Ovary (tissue), 10 donors: ENCODE measurements at regions of chr17 and their contacts with region 1.

Region 1: GRCh38 chr17:28792877-28793661 is 49.3 kb downstream of the TRAF4 start:
- DNase-seq: no peak
- H3K4me3 ChIP-seq: no peak overlapping the region
- H3K27ac ChIP-seq: no peak overlapping the region
- H3K4me1 ChIP-seq: no peaks in the 10 kb centered on the region
- H3K27me3 ChIP-seq: no peaks in the 10 kb centered on the region
- CTCF ChIP-seq: no peak
- EP300 ChIP-seq: no peak
- POLR2A ChIP-seq: no peak

Region 2: GRCh38 chr17:28509789-28510188 is 283.3 kb before region 1 on chr17:
- intact Hi-C with region 1: loop called in 1 of 4 experiments (anchors 5 kb)
- DNase-seq: no peak
- H3K4me3 ChIP-seq: no peak overlapping the region
- H3K27ac ChIP-seq: no peak overlapping the region
- H3K4me1 ChIP-seq: no peaks in the 10 kb centered on the region
- H3K27me3 ChIP-seq: no peaks in the 10 kb centered on the region
- CTCF ChIP-seq: no peak
- EP300 ChIP-seq: no peak
- POLR2A ChIP-seq: no peak

Region 3: GRCh38 chr17:28634206-28634856 is 158.7 kb before region 1 on chr17:
- intact Hi-C with region 1: no loop called
- DNase-seq: no peak
- H3K4me3 ChIP-seq: no peak overlapping the region
- H3K27ac ChIP-seq: no peak overlapping the region
- H3K4me1 ChIP-seq: no peaks in the 10 kb centered on the region
- H3K27me3 ChIP-seq: no peaks in the 10 kb centered on the region
- CTCF ChIP-seq: no peak
- EP300 ChIP-seq: no peak
- POLR2A ChIP-seq: no peak